ENCODE measurements at regions of chr6 and their contacts with region 1.

Region 1: GRCh38 chr6:166402582-166403277 is 20.0 kb upstream of the MPC1 start:
- DNase-seq: no peak
- H3K4me3 ChIP-seq: no peak overlapping the region
- H3K27ac ChIP-seq: no peak overlapping the region
- H3K4me1 ChIP-seq: no peaks in the 10 kb centered on the region
- H3K27me3 ChIP-seq: peaks cover 0 to under 1% of the 10 kb centered on the region in 2 experiments
- CTCF ChIP-seq: no peak
- POLR2A ChIP-seq: no peak

Region 2: DNA sequence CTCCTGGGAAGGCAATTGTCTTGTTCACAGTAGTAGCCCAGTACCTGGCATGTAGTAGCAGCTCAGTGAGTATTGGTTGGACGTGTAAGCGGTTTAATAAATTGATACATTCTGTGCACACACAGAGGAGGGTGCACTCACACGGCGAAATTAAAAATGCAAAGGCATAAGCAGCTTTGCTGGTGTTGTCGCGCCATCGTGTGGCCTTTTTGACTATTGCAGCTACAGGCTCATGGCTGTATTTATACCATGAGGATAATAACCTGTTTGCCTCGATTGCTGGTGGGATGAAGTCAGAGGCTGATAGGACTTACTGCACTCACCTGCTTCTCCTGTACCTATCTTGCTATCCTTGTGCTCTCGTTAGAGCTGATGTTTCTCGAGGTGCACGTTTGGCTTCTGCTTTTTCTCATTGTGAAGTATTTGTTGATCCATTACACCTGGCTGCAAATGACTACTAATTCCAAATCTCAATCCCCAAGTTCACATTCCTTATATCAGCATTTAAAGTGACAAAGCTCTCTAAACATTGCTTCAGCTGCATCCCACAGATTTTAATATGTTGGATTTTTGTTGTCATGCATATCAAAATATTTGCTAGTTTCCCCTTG is 296.5 kb before region 1 on chr6:
- CTCF ChIA-PET with region 1: no interaction called
- POLR2A ChIA-PET with region 1: no interaction called
- dilution Hi-C with region 1: no loop called
- intact Hi-C with region 1: no loop called
- DNase-seq: peak; percentile 49
- H3K4me3 ChIP-seq: no peak overlapping the region
- H3K27ac ChIP-seq: no peak overlapping the region
- H3K4me1 ChIP-seq: no peaks in the 10 kb centered on the region
- H3K27me3 ChIP-seq: no peaks in the 10 kb centered on the region
- CTCF ChIP-seq: peak; percentile 69 to 71
- POLR2A ChIP-seq: no peak

Region 3: DNA sequence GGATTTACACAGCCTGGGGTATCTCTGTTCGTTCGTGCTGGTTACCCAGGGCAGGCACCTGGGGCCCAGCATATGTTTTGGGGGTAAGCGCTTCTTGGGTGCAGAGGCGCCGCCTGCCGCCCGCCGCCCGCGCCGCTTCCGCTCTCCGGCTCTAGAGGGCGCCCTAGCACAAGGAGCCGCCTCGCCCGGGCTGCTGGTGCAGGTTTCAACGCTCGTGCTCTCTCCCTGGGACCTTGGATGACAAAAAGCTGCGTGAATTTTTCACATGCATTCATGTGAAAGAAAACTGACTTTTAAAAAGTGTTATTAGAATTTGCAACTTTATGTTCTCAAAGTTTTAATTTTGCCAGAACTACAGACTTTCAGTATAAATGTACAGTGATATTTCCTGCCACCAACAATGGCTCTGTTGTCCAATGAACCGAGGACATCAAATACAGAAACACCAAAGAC is 127.0 kb before region 1 on chr6:
- CTCF ChIA-PET with region 1: interaction called, 125 read pairs
- POLR2A ChIA-PET with region 1: no interaction called
- dilution Hi-C with region 1: no loop called
- intact Hi-C with region 1: loop called (anchors 1 kb)
- DNase-seq: peak; percentile 54
- H3K4me3 ChIP-seq: no peak overlapping the region
- H3K27ac ChIP-seq: no peak overlapping the region
- H3K4me1 ChIP-seq: no peaks in the 10 kb centered on the region
- H3K27me3 ChIP-seq: no peaks in the 10 kb centered on the region
- CTCF ChIP-seq: peak; percentile 93 to 98
- POLR2A ChIP-seq: no peak

Region 4: GRCh38 chr6:166313255-166314070 is 89.3 kb before region 1 on chr6:
- CTCF ChIA-PET with region 1: interaction called, 158 read pairs
- POLR2A ChIA-PET with region 1: no interaction called
- dilution Hi-C with region 1: no loop called
- intact Hi-C with region 1: loop called (anchors 1 kb)
- DNase-seq: peak; percentile 45
- H3K4me3 ChIP-seq: no peak overlapping the region
- H3K27ac ChIP-seq: no peak overlapping the region
- H3K4me1 ChIP-seq: no peaks in the 10 kb centered on the region
- H3K27me3 ChIP-seq: peaks cover 19 to 23% of the 10 kb centered on the region in 2 experiments
- CTCF ChIP-seq: peak; percentile 73
- POLR2A ChIP-seq: no peak

Region 5: GRCh38 chr6:166382933-166383801 is 19.6 kb before region 1 on chr6 and contains the start of gene MPC1:
- CTCF ChIA-PET with region 1: interaction called, 21 read pairs
- POLR2A ChIA-PET with region 1: no interaction called
- dilution Hi-C with region 1: no loop called
- intact Hi-C with region 1: loop called (anchors 1 kb)
- DNase-seq: peak; percentile 96
- H3K4me3 ChIP-seq: peak within 1 kb of the TSS; percentile 82 to 95 (median 94)
- H3K27ac ChIP-seq: peak within 1 kb of the TSS; percentile 68
- H3K4me1 ChIP-seq: peaks cover 4% of the 10 kb centered on the region
- H3K27me3 ChIP-seq: no peaks in the 10 kb centered on the region
- CTCF ChIP-seq: no peak
- POLR2A ChIP-seq: peak; percentile 16
- total RNA-seq, gene MPC1: 17.5 and 22.9 TPM in 2 replicates